Aorta (tissue), 5 donors: ENCODE measurements at regions of chr12 and their contacts with region 1.

Region 1: GRCh38 chr12:20601668-20602280 is 93.4 kb upstream of the SLCO1C1 start:
- DNase-seq: no peak
- ATAC-seq: no peak
- H3K4me3 ChIP-seq: no peak overlapping the region
- H3K27ac ChIP-seq: no peak overlapping the region
- H3K4me1 ChIP-seq: peaks cover 0 to 7% of the 10 kb centered on the region in 2 donors
- H3K27me3 ChIP-seq: no peaks in the 10 kb centered on the region

Region 2: GRCh38 chr12:19757317-19757877 is 844.4 kb before region 1 on chr12:
- intact Hi-C with region 1: loop called in 1 of 2 experiments (anchors 10 kb)
- DNase-seq: no peak
- ATAC-seq: peak; percentile 59
- H3K4me3 ChIP-seq: no peak overlapping the region
- H3K27ac ChIP-seq: no peak overlapping the region
- H3K4me1 ChIP-seq: peaks cover 0 to 2% of the 10 kb centered on the region in 2 donors
- H3K27me3 ChIP-seq: no peaks in the 10 kb centered on the region

Region 3: GRCh38 chr12:20382117-20382516 is 219.7 kb before region 1 on chr12:
- intact Hi-C with region 1: no loop called
- DNase-seq: no peak
- ATAC-seq: no peak
- H3K4me3 ChIP-seq: no peak overlapping the region
- H3K27ac ChIP-seq: no peak overlapping the region
- H3K4me1 ChIP-seq: peaks cover 0 to 5% of the 10 kb centered on the region in 2 donors
- H3K27me3 ChIP-seq: no peaks in the 10 kb centered on the region

Region 4: GRCh38 chr12:20463913-20464524 is 137.8 kb before region 1 on chr12:
- intact Hi-C with region 1: loop called in 1 of 2 experiments (anchors 10 kb)
- DNase-seq: no peak
- ATAC-seq: no peak
- H3K4me3 ChIP-seq: no peak overlapping the region
- H3K27ac ChIP-seq: no peak overlapping the region
- H3K4me1 ChIP-seq: no peaks in the 10 kb centered on the region
- H3K27me3 ChIP-seq: no peaks in the 10 kb centered on the region

Region 5: DNA sequence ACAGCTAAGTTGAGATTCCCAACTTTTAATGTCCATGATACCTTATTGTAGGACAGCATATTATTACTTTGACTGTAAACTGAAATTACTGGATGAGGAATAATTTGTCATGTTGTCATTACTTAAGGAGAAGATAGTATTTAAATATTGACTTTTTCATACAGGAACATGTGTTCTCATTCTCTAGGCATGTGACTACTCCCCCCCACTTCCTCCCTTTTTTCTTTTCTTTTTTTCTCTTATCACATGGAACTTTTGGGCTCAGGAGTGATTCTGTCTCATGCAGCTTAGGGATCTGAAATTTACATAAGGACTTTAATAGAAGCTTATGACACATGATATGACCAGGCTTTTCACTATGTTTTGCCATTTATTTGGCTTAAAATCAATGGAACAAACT is 34.4 kb before region 1 on chr12:
- intact Hi-C with region 1: no loop called
- DNase-seq: no peak
- ATAC-seq: no peak
- H3K4me3 ChIP-seq: no peak overlapping the region
- H3K27ac ChIP-seq: no peak overlapping the region
- H3K4me1 ChIP-seq: peaks cover 0 to 6% of the 10 kb centered on the region in 2 donors
- H3K27me3 ChIP-seq: no peaks in the 10 kb centered on the region

Region 6: DNA sequence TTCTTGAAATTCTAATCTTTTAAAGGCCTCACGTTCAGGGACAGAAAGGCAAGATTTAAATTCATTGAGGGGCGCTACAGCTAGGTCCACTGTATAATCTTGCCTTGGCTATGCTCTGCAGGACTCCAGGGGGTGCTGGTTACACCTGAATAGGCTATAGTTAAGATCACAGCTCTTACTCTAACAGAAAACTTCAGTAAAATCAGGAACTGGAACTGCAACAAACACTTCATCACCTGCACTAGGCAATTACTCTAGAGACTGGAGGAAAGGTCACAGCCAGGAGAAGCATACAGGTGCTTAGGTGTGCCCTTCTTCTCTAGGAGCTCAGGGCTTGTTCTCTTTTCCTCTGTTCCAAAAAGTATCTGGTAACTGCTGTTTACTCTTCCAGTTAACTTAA is 114.3 kb after region 1 on chr12:
- intact Hi-C with region 1: no loop called
- DNase-seq: no peak
- ATAC-seq: no peak
- H3K4me3 ChIP-seq: no peak overlapping the region
- H3K27ac ChIP-seq: no peak overlapping the region
- H3K4me1 ChIP-seq: no peaks in the 10 kb centered on the region
- H3K27me3 ChIP-seq: no peaks in the 10 kb centered on the region